Common myeloid progenitor, CD34-positive (primary cell): ENCODE measurements at regions of chr10 and their contacts with region 1.

Region 1: GRCh38 chr10:29304264-29305030 is 15.6 kb downstream of the LYZL1 start:
- DNase-seq: peak; percentile 51 to 65 (median 52)
- H3K4me3 ChIP-seq: peak overlapping the region in 4 of 7 experiments; percentile 19 to 69 (median 40)
- H3K27ac ChIP-seq: no peak overlapping the region
- H3K4me1 ChIP-seq: peaks cover 0 to 5% (median 2%) of the 10 kb centered on the region in 4 experiments
- H3K27me3 ChIP-seq: peaks cover 0 to 10% (median 2%) of the 10 kb centered on the region in 5 experiments

Region 2: DNA sequence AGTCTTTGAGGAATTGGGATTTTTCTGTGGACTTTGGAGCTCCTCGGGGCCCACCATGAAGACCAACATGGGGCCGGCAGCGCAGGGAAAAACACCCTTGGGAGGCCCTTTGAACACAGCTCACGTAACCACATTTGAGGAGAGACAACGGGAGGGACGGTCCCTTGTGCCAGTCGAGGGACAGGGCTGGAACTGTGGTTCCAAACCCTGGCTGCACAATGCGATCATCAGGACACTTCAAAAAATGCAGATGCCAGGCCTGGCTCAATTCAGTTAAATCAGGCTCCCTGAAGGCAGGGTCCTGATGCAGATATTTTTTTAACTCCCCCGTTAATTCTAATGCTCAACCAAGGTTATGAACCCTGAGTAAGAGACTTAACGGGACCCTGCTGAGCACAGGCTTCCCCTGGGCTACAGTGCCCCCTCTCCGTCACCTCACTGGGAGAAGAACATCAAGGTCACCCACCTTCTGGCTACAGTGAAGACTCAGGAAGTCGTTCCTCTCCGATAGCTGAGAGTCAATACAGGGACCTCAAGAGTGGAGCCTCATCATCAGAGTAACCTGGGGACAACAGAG is 14.8 kb after region 1 on chr10:
- CTCF ChIA-PET with region 1: interaction called, 12 read pairs
- POLR2A ChIA-PET with region 1: no interaction called
- DNase-seq: no peak
- H3K4me3 ChIP-seq: no peak overlapping the region
- H3K27ac ChIP-seq: no peak overlapping the region
- H3K4me1 ChIP-seq: peaks cover 2 to 40% (median 20%) of the 10 kb centered on the region in 4 experiments
- H3K27me3 ChIP-seq: peaks cover 0 to 6% (median 0%) of the 10 kb centered on the region in 5 experiments